ENCODE measurements at regions of chr6 and their contacts with region 1.

Region 1: GRCh38 chr6:28586962-28587745 is 61.5 kb downstream of the GPX5 start:
- DNase-seq: peak; percentile 72

Region 2: DNA sequence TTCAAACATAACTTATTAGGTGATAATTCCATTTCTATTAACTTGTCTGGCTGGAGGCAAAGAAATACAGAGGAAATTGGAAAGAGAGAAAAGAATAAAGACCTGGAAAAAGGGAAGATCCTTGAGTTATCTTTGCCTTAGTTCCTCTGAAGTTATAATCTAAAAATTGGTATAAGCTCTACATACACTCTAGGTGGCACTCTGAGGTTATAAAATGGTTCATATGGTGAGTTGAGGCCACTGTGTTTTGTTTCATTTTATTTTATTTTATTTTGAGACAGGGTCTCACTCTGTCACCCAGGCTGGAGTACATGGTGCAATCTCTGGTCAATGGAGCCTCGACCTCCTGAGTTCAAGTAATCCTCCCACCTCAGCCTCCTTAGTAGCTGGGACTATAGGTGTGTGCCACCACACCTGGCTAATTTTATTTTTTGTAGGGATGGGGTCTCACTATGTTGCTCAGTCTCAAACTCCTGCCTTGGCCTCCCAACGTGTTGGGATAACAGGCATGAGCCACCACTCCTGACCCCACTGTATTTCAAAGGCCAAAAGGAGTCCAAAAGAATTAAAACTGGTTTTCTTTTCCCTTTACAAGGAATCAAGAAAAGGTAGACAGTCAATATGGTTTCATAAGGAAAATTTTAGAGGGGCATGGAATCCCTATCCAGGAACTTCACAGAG is 90.9 kb before region 1 on chr6:
- CTCF ChIA-PET with region 1: interaction called, 10 read pairs
- POLR2A ChIA-PET with region 1: interaction called, 4 read pairs
- DNase-seq: no peak

Region 3: GRCh38 chr6:28542440-28543296 is 44.5 kb before region 1 on chr6:
- CTCF ChIA-PET with region 1: interaction called, 8 read pairs
- POLR2A ChIA-PET with region 1: interaction called, 20 read pairs
- DNase-seq: peak; percentile 81

Region 4: DNA sequence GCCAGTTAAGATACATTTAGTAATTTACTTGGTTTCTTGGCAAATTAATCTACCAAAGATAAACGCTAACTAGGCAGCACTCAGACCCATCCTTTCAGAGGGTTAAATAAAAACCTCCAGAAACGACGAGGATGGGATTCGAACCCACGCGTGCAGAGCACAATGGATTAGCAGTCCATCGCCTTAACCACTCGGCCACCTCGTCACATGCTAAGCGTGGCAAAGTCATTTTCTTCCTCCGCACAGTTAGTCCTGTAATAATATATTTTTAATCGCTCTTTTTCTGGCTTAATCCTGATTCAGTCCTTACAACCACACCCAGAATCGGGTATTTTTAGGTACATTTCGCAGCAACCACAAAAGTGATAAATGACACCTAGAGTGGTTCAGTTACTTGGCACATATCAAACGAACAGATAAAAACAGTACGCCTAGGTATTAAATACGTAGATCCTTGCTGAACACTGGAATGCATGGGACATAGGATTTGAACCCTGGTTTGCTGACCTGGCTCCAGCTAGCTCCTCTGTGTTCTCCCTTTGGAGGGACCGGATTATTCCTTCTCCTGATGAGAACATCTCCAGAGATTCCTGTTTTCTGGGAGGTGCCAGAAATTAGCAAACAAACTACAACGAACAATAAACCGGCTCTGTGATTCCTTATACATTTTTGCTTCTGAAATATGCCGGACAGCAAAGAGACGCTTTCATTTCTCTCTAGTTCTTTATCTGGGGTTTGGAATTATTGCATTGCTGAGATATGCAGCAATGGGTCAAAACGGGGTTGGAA is 10.3 kb after region 1 on chr6:
- CTCF ChIA-PET with region 1: no interaction called
- POLR2A ChIA-PET with region 1: interaction called, 23 read pairs
- DNase-seq: peak; percentile 44

Region 5: DNA sequence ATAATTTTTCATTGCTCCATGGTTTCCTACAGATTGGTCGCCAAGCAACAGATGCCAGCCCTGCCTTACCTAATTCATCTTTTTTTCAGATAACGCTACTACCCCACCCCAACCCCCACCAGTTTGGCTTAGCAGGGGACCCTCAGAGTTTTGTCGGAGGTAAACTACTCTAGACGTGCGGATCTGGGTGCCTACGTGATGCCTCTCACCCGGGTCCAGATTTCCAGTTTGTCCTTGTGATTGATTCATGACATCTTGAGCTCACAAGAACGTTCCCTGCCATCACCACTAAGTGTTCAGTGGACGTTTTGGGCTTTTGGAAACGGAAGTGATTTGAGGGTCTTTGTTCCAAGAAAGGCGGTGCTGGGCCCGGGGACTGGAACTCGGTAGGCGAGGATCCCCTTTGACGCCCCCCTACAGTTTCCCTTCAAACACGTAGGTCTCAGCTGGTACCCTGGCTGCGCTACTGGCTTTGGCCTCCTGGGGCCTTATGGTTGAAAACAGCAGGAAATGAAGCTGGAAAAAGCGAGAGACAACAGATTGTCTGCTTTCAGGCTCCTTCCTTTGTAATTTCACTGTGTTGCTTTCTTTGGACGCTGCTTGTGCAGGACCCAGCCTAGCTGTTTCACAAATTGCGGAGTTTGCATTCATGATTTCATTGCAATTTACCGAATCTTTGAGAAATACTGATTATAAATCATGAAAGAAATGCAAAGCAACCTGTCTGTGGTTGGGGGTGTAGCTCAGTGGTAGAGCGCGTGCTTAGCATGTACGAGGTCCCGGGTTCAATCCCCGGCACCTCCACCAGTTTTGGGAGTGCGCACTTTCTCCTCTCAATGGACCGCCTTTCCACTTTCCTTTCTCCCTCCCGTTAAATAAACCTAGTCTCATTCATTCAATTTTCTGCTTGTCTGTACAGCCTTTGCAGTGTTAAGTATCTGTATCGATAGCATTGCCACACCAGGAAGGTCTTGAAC is 19.6 kb after region 1 on chr6:
- CTCF ChIA-PET with region 1: no interaction called
- POLR2A ChIA-PET with region 1: interaction called, 15 read pairs
- DNase-seq: peak; percentile 82

Measured in HEK293T (cell line).